ENCODE measurements at regions of chr16 and their contacts with region 1.

Region 1: DNA sequence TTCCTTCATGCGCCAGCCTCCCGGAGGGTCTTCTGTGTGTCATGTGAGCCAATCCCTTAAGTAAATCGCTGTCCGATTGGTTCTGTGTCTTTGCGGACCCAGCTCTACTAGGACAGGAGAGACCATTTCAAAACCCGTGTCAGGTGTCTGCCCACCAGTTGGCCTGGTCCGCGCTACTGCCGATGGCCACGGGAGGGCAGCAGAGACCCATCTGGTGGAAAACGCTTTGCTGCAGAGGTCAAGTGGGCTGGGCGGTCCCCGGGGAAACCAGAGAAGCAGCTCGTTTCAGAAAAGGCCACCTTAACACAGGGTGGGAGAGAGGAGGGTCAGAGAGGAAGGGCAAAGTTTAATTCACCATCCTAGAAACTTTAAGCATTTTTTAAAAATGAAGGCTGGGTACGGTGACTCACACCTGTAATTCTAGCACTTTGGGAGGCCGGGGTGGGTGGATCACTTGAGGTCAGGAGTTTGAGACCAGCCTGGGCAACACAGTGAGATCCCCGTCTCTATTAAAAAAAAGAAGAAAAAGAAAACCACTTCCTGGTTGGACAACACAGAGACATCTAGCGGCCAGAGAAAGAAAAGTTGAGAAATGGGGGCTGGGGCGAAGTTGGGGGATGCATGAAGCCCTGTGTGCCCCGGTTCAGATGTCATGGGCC is 2.8 kb upstream of the CIBAR2 start:
- DNase-seq: peak; percentile 76
- ATAC-seq: peak; percentile 88
- H3K4me3 ChIP-seq: peak overlapping the region in 4 of 5 experiments; percentile 25 to 49 (median 38)
- H3K4me3 Mint-ChIP-seq: peak overlapping the region; percentile 84
- H3K27ac ChIP-seq: no peak overlapping the region
- H3K27ac Mint-ChIP-seq: peak overlapping the region; percentile 72
- H3K4me1 ChIP-seq: peaks cover 0 to 8% of the 10 kb centered on the region in 2 donors
- H3K4me1 Mint-ChIP-seq: peaks cover 8% of the 10 kb centered on the region
- H3K27me3 ChIP-seq: no peaks in the 10 kb centered on the region
- H3K27me3 Mint-ChIP-seq: no peaks in the 10 kb centered on the region
- CTCF ChIP-seq: peak; percentile 92

Region 2: GRCh38 chr16:85079785-85080574 is 35.1 kb before region 1 on chr16:
- CTCF ChIA-PET with region 1: no interaction called
- POLR2A ChIA-PET with region 1: no interaction called
- intact Hi-C with region 1: no loop called
- DNase-seq: no peak
- ATAC-seq: no peak
- H3K4me3 ChIP-seq: no peak overlapping the region
- H3K4me3 Mint-ChIP-seq: no peak overlapping the region
- H3K27ac ChIP-seq: no peak overlapping the region
- H3K27ac Mint-ChIP-seq: no peak overlapping the region
- H3K4me1 ChIP-seq: peaks cover 27 to 33% of the 10 kb centered on the region in 2 donors
- H3K4me1 Mint-ChIP-seq: peaks cover 24% of the 10 kb centered on the region
- H3K27me3 ChIP-seq: peaks cover 0 to 6% (median 0%) of the 10 kb centered on the region in 4 experiments
- H3K27me3 Mint-ChIP-seq: peaks cover 23% of the 10 kb centered on the region
- CTCF ChIP-seq: no peak

Region 3: GRCh38 chr16:85104821-85105391 is 10.1 kb before region 1 on chr16:
- CTCF ChIA-PET with region 1: interaction called, 11 read pairs
- POLR2A ChIA-PET with region 1: no interaction called
- intact Hi-C with region 1: no loop called
- DNase-seq: peak; percentile 65
- ATAC-seq: peak; percentile 67
- H3K4me3 ChIP-seq: peak overlapping the region in 1 of 5 experiments; percentile 19
- H3K4me3 Mint-ChIP-seq: peak overlapping the region; percentile 47
- H3K27ac ChIP-seq: peak overlapping the region in 1 of 2 donors; percentile 29
- H3K27ac Mint-ChIP-seq: peak overlapping the region; percentile 71
- H3K4me1 ChIP-seq: peaks cover 20 to 36% of the 10 kb centered on the region in 2 donors
- H3K4me1 Mint-ChIP-seq: peaks cover 21% of the 10 kb centered on the region
- H3K27me3 ChIP-seq: no peaks in the 10 kb centered on the region
- H3K27me3 Mint-ChIP-seq: no peaks in the 10 kb centered on the region
- CTCF ChIP-seq: no peak

Measured in B cell (primary cell).